ENCODE measurements at regions of chr5 and their contacts with region 1.

Region 1: GRCh38 chr5:127290019-127290945 is at the start of gene MEGF10:
- DNase-seq: peak; percentile 44
- ATAC-seq: peak; percentile 39
- H3K4me3 Mint-ChIP-seq: peak within 1 kb of the TSS; percentile 32
- H3K27ac Mint-ChIP-seq: no peak within 1 kb of the TSS
- H3K4me1 Mint-ChIP-seq: peaks cover 11% of the 10 kb centered on the region
- H3K27me3 Mint-ChIP-seq: peaks cover 62% of the 10 kb centered on the region
- CTCF ChIP-seq: peak; percentile 56
- total RNA-seq, gene MEGF10: not detected

Region 2: DNA sequence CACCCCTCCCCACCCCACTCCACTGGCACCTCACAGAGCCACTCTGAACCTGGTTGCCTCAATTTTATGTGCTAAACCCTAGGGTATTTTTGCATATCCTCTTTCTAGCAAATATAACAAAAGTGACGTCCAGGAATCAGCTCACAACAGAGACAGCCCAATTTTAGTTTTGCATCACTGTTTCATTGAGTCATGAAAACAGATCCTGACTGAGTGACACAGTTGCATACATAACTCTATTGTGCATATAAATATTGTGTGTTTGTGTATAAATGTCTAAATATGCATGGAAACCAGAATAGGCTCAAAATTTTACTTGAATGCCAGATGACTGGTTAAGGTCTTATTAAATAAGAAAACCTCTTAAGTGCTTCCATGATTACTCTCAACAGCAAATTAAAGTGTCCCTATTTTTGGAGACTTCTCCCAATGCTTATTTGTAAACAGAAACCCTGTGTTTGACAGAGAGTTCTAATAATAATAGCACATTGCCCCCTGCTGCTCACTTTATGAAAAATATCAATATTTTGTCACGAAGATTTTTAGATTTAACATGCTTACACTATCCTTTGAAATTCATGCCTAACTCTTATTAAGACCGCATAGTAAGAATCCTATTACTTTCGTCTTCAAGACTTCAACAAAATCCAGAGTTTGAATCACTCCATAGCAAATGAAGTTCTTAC is 151.7 kb after region 1 on chr5:
- CTCF ChIA-PET with region 1: interaction called, 4 read pairs
- POLR2A ChIA-PET with region 1: no interaction called
- intact Hi-C with region 1: loop called (anchors 5 kb)
- DNase-seq: no peak
- ATAC-seq: no peak
- H3K4me3 Mint-ChIP-seq: no peak overlapping the region
- H3K27ac Mint-ChIP-seq: no peak overlapping the region
- H3K4me1 Mint-ChIP-seq: no peaks in the 10 kb centered on the region
- H3K27me3 Mint-ChIP-seq: peaks cover 6% of the 10 kb centered on the region
- CTCF ChIP-seq: peak; percentile 42